Panc1 (cell line): ENCODE measurements at regions of chr4 and their contacts with region 1.

Region 1: DNA sequence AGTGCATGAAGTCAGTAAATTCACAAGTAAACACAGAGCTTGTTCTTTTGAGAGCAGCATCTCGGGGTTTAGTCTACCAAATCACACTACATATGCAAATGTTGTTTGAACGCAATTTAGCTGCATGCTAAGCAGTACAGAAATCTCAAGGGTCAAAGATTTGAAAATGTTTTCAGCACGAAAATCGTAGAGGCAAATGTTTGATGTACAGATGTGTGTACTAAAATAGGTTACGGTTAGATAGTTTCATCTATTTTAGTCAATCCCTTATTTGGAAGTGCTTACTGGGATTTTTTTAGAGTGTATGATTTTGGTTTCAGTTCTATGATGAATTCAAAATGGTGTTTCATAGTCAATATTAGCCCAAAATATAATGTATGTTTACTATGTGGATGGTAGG is 1928.2 kb upstream of the TENM3 start:
- DNase-seq: no peak
- ATAC-seq: no peak
- H3K4me3 ChIP-seq: no peak overlapping the region
- H3K27ac ChIP-seq: no peak overlapping the region
- H3K4me1 ChIP-seq: no peaks in the 10 kb centered on the region
- H3K27me3 ChIP-seq: no peaks in the 10 kb centered on the region
- CTCF ChIP-seq: no peak

Region 2: DNA sequence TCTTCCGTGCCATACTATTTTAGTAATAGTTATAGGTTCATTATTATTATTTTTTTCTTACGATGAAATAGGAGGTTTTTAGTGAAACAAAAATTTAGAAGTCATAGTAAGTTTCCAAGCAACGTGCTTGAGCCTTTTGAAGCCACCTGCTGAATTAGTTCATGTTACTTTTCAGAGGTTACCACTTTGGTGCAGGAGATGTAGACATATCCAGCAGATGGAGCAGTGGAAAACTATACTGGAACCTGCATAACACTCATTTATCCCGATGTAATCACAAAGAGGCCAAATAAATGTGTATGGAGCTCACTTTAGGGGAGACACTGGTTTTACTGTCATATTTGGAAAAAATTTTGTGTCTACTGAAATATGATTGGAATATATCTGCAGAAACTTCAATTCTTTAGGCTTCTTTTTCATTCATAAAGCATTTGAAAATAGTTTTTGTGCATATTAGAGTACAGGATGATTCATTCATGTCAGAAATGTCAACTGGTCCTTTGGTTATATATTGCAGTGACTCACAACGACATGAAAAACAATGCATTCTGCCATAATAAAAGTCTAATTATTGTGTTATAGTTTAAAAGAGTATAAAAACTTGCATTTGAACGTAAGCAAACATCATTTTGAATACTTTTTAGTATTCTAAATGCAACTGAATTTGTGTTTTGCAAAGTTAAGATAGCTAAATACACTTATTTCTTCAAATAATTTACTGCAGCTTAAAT is 254.6 kb before region 1 on chr4:
- CTCF ChIA-PET with region 1: no interaction called
- POLR2A ChIA-PET with region 1: no interaction called
- in situ Hi-C with region 1: no loop called
- intact Hi-C with region 1: loop called (anchors 5 kb)
- DNase-seq: no peak
- ATAC-seq: no peak
- H3K4me3 ChIP-seq: no peak overlapping the region
- H3K27ac ChIP-seq: no peak overlapping the region
- H3K4me1 ChIP-seq: no peaks in the 10 kb centered on the region
- H3K27me3 ChIP-seq: no peaks in the 10 kb centered on the region
- CTCF ChIP-seq: no peak; the same call in 1 of the 2 replicates

Region 3: DNA sequence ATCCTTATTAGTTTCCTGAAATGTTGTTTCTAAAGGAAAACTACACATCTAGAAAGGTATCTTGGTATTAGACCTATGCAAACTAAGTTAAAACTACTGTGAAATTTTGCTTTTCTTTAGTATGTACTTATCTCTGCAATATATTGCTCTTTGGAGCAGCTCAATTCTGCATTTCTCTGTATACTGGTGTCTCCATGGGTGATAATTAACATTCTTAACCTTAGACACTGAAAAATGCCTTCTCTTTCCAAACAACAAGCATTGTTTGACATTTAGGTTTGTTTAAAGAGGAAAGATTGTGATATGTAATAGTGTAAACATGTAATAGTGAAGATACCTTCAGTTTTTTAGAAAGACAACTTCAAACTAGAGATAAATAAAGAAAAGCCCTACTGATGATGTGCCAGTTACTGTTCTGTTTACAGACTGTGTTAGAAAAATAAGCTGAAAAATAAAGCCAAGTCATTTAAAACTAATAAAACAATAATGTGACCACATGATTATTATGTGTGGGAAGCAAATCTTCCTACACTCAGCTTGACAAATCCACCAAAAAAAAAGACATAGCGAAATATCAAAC is 107.1 kb before region 1 on chr4:
- CTCF ChIA-PET with region 1: no interaction called
- POLR2A ChIA-PET with region 1: no interaction called
- in situ Hi-C with region 1: no loop called
- intact Hi-C with region 1: no loop called
- DNase-seq: no peak
- ATAC-seq: no peak
- H3K4me3 ChIP-seq: no peak overlapping the region
- H3K27ac ChIP-seq: no peak overlapping the region
- H3K4me1 ChIP-seq: no peaks in the 10 kb centered on the region
- H3K27me3 ChIP-seq: no peaks in the 10 kb centered on the region
- CTCF ChIP-seq: no peak